MCF 10A (cell line): ENCODE measurements at regions of chr20 and their contacts with region 1.

Region 1: DNA sequence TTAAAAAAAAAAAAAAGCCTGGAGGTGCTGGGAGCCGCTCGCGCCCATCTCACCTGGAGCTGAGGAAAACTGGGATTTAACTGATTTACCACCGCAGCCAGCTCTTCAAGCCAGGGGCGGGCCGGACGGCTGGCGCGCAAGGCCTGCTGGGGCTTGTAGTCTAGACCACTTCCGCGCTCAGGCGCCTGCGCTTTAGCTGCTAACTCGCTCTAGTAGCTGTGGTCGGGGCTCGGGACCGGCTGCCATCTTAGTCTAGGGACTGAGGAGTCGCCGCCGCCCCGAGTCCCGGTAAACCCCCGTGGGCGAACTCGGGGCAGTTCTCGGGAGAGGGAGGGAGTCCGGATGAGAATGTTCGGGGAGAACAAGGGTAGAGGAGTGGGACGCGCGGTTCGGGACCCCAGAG is at the start of gene ITCH:
- DNase-seq: peak; percentile 96
- H3K4me3 Mint-ChIP-seq: peak within 1 kb of the TSS; percentile 95
- H3K27ac Mint-ChIP-seq: peak within 1 kb of the TSS; percentile 100
- H3K4me1 Mint-ChIP-seq: peaks cover 13% of the 10 kb centered on the region
- H3K27me3 Mint-ChIP-seq: no peaks in the 10 kb centered on the region
- CTCF ChIP-seq: no peak
- total RNA-seq, gene ITCH: 57.3 and 68.3 TPM in 2 replicates

Region 2: DNA sequence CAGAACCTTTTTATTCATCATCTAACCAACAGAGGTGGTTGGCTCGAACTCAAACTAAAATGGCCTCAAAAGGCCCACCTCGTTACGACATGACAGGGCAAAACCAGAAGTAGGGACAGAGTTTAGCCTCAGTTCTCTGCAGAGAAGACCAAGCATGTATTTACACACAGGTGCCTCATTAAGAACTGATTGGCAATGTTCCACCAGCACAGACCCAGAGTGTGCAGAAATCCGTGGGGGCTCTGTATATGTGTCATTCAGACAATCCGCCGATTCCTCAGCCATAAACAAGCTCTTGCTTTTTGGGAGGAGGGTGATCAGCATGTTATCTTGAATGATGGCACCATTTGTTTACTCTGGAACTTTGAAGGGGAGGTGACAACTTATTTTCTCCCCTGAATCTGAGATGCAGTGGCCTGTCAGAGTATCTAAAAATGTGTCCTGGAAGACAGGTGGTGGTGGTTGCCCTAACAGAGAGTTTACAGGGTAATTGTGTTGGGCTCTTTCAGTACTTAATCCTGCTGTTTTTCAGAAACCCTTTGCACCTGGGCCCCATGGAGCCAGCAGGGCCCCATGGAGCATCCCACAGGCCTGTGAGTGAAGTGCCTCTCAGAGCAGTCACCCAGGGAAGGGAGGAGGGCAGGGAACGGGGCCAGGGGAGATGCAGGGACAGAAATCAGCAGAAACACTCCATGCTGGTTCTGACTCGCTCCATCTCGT is 1660.2 kb before region 1 on chr20:
- CTCF ChIA-PET with region 1: no interaction called
- POLR2A ChIA-PET with region 1: no interaction called
- intact Hi-C with region 1: no loop called
- DNase-seq: no peak
- H3K4me3 Mint-ChIP-seq: no peak overlapping the region
- H3K27ac Mint-ChIP-seq: no peak overlapping the region
- H3K4me1 Mint-ChIP-seq: no peaks in the 10 kb centered on the region
- H3K27me3 Mint-ChIP-seq: no peaks in the 10 kb centered on the region
- CTCF ChIP-seq: no peak

Region 3: DNA sequence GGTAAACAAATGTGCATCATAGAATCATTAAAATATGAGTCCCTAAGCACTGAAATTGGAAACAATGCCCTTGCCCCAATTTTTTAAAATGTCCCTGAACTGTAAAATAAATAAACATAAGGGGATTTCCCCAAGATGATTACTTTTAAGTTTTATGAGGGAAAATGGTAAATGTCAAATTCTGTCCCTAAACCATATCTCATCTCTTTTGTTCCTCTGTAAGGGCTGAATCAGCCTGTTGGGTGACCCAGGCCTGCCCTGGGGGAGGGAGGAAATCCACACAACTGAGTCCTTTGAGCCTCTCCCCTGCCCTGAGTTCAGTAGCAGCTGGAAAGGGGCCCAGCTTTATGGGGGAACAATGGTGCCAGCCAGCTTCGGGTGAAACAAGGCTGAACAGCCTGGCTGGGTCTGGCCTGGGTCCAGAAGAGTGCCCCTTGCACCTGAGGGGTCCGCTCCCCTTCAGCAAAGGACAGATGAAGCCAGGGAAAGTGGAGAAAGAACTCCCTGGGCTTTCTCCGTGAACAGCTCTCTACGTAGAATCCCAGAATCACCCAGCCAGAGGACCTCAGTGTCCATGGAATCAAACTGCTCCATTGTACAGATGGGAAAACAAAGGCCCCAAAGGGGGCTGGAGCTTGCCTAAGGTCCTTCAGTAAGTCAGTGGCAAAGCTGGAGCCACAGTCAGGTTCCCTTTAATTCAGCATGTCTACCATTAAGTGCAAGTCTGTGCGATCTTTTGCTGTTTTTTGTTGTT is 28.2 kb before region 1 on chr20:
- CTCF ChIA-PET with region 1: interaction called, 4 read pairs
- POLR2A ChIA-PET with region 1: interaction called, 70 read pairs
- intact Hi-C with region 1: no loop called
- DNase-seq: peak; percentile 42
- H3K4me3 Mint-ChIP-seq: no peak overlapping the region
- H3K27ac Mint-ChIP-seq: peak overlapping the region; percentile 85
- H3K4me1 Mint-ChIP-seq: peaks cover 15% of the 10 kb centered on the region
- H3K27me3 Mint-ChIP-seq: no peaks in the 10 kb centered on the region
- CTCF ChIP-seq: no peak

Region 4: GRCh38 chr20:34377072-34377847 is 14.2 kb after region 1 on chr20:
- CTCF ChIA-PET with region 1: interaction called, 18 read pairs
- POLR2A ChIA-PET with region 1: interaction called, 48 read pairs
- intact Hi-C with region 1: no loop called
- DNase-seq: no peak
- H3K4me3 Mint-ChIP-seq: no peak overlapping the region
- H3K27ac Mint-ChIP-seq: peak overlapping the region; percentile 25
- H3K4me1 Mint-ChIP-seq: no peaks in the 10 kb centered on the region
- H3K27me3 Mint-ChIP-seq: no peaks in the 10 kb centered on the region
- CTCF ChIP-seq: no peak

Region 5: GRCh38 chr20:34390769-34391452 is 27.8 kb after region 1 on chr20:
- CTCF ChIA-PET with region 1: interaction called, 4 read pairs
- POLR2A ChIA-PET with region 1: interaction called, 28 read pairs
- intact Hi-C with region 1: no loop called
- DNase-seq: peak; percentile 95
- H3K4me3 Mint-ChIP-seq: no peak overlapping the region
- H3K27ac Mint-ChIP-seq: peak overlapping the region; percentile 55
- H3K4me1 Mint-ChIP-seq: peaks cover 23% of the 10 kb centered on the region
- H3K27me3 Mint-ChIP-seq: no peaks in the 10 kb centered on the region
- CTCF ChIP-seq: no peak

Region 6: DNA sequence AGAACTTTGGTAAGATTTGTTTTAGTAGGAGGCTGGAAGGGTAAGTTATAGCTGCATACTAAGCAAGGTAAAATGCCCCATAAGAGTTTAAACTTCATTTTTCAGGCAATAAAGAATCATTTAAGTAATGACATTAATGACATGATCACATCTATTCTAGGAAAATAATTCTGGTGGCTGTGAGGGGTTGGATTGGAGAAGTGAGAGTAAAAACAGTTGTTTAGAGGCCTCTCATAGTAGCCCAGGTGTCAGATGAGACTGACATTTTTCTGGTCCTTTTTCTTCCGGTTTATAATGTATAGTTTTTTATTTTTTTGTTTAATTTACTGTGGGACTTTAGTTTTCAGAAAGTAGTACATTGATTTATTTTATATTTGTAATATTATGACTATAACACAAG is 40.8 kb after region 1 on chr20:
- CTCF ChIA-PET with region 1: interaction called, 3 read pairs
- POLR2A ChIA-PET with region 1: interaction called, 20 read pairs
- intact Hi-C with region 1: no loop called
- DNase-seq: no peak
- H3K4me3 Mint-ChIP-seq: no peak overlapping the region
- H3K27ac Mint-ChIP-seq: peak overlapping the region; percentile 0
- H3K4me1 Mint-ChIP-seq: peaks cover 26% of the 10 kb centered on the region
- H3K27me3 Mint-ChIP-seq: no peaks in the 10 kb centered on the region
- CTCF ChIP-seq: no peak

Region 7: DNA sequence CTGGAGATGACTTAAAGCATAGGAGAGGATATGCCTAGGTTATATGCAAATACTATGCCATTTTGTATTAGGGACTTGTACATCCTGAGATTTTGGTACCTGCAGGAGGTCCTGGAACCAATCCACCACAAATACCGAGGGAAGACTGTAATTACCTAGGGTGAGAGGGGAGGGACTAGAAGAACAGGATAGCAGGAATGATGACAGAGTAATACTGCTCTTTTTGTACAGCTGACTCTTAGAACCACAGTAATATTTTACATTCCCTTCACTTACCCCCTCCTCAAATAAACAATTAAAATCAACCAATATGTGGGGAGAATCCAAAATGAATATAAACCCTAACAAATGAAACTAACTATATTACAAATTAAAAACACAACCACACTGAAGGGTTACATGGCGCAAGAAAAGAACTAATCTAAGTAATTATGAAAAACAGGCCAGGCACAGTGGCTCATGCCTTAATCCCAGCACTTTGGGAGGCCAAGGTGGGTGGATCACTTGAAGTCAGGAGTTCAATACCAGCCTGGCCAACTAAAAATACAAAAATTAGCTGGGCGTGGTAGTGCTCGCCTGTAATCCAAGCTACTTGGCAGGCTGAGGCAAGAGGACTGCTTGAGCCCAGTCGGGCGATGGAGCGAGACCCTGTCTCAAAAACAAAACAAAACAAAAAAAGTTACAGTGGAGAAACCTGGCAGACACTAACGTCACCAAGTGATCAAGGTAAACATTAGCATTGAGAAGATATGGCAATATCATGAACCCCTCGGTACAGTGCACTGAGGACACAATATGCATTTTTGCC is 232.5 kb after region 1 on chr20:
- CTCF ChIA-PET with region 1: no interaction called
- POLR2A ChIA-PET with region 1: no interaction called
- intact Hi-C with region 1: no loop called
- DNase-seq: no peak
- H3K4me3 Mint-ChIP-seq: no peak overlapping the region
- H3K27ac Mint-ChIP-seq: no peak overlapping the region
- H3K4me1 Mint-ChIP-seq: no peaks in the 10 kb centered on the region
- H3K27me3 Mint-ChIP-seq: no peaks in the 10 kb centered on the region
- CTCF ChIP-seq: no peak